ENCODE measurements at regions of chr11 and their contacts with region 1.

Region 1: GRCh38 chr11:57680552-57680874 is 12.6 kb downstream of the ZDHHC5 start:
- DNase-seq: no peak
- H3K4me3 ChIP-seq: no peak overlapping the region
- H3K27ac ChIP-seq: no peak overlapping the region
- H3K4me1 ChIP-seq: no peaks in the 10 kb centered on the region
- H3K27me3 ChIP-seq: no peaks in the 10 kb centered on the region
- CTCF ChIP-seq: no peak
- EP300 ChIP-seq: no peak
- POLR2A ChIP-seq: no peak
- RAD21 ChIP-seq: no peak

Region 2: DNA sequence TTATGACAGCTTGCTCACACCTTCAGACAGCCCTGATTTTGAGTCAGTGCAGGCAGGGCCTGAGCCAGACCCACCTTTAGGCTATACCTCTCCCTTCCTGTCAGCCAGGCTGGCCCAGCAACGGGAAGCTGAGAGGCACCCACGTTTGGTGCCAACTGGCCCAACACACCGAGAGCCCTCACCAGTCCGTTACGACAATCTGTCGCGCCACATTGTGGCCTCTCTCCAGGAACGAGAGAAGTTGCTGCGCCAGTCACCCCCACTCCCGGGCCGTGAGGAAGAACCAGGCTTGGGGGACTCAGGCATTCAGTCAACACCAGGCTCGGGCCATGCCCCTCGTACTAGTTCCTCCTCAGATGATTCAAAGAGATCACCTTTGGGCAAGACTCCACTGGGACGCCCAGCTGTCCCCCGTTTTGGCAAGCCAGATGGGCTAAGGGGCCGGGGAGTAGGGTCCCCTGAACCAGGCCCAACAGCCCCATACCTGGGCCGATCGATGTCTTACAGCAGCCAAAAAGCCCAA is 18.4 kb after region 1 on chr11:
- CTCF ChIA-PET with region 1: interaction called, 4 read pairs
- POLR2A ChIA-PET with region 1: interaction called, 20 read pairs
- DNase-seq: no peak
- H3K4me3 ChIP-seq: no peak overlapping the region
- H3K27ac ChIP-seq: no peak overlapping the region
- H3K4me1 ChIP-seq: no peaks in the 10 kb centered on the region
- H3K27me3 ChIP-seq: no peaks in the 10 kb centered on the region
- CTCF ChIP-seq: no peak
- EP300 ChIP-seq: no peak
- POLR2A ChIP-seq: no peak
- RAD21 ChIP-seq: no peak

Measured in H1 (cell line).